ENCODE measurements at regions of chr3 and their contacts with region 1.

Region 1: DNA sequence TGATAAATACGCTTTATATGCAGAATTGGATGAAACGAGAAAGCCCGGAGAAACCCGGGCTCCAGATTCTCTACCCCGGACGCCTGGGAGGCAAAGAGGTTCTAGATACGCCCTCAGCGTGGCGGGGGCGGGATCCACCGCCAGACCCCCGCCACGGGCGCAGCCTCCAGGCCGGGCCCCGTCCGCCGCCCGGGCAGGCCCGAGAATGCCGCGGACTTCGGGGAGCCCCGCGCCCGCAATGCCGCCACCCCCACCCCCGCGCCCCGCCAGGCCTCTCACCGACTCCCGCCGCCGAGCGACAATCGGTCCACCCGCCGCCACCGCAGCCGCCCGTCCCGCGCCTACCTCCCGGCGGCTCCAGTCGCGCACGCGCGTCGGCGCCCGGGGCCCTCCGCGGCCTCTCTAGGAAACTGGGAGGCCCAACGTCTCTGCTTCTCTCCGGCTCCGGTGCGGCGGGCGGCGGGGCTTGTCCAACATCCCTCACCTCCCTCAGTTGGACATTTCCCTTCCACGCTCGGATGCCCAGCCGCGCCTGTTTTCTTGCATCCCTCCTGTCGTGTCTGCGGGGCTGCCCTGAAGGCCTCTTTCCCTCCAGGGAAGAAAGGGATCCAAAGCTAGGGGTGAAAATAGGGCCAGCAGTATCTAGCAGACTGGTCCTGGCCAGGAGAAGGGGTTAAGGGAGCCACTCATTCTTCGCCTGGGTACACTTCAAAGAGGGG is at the start of gene ZNF445:
- DNase-seq: peak; percentile 83 to 91
- ATAC-seq: peak; percentile 90 to 100 (median 97)
- H3K4me3 ChIP-seq: peak within 1 kb of the TSS; percentile 85
- H3K27ac ChIP-seq: peak within 1 kb of the TSS; percentile 80
- H3K4me1 ChIP-seq: peaks cover 29% of the 10 kb centered on the region
- H3K27me3 ChIP-seq: no peaks in the 10 kb centered on the region
- CTCF ChIP-seq: no peak
- total RNA-seq, gene ZNF445: 7.3 to 16.8 (median 9.7) TPM

Region 2: DNA sequence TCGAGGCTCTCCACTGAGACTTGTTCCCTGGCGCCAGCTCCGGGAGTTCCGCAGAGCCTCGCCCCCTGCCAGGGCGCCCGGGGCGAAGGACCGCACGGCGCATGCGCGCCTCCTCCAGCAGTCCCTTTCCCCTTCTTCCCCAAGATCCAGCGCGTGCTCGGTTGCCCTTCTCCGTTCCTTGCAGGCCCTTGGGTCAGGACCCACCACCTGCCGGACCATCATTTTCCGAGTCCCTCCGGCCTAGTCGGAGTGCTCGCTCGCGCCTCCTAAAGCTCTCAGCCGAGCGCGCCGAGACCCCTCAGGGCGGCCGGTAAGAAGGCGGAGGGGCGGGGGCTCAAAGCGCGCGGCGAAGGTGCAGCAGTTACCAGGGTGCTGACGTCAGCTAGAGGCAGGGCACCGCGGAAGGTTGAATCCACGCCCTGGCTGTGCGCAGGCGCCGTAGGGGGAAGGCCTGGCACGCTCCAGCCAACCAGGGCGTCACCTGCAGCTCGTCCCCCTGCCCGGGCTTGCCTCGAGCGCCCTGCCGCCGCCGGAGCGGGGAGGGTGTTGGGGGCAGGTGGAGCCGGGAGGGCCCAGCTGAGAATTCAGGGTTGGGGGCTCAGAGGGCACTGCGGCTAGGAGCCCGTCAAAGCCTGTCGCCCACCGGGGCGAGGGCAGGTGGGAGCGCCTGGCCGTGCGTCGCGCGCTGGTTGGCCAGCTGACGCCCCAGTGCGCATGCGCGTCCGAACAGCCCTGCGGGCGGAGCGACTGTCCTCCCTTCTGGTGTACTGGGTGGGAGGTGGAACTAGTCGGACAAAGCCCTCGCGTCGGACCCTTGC is 139.3 kb before region 1 on chr3 and contains the start of gene TCAIM:
- intact Hi-C with region 1: loop called in 1 of 2 experiments (anchors 10 kb)
- DNase-seq: peak; percentile 97 to 99
- ATAC-seq: peak; percentile 99
- H3K4me3 ChIP-seq: peak within 1 kb of the TSS; percentile 73
- H3K27ac ChIP-seq: peak within 1 kb of the TSS; percentile 99
- H3K4me1 ChIP-seq: peaks cover 25% of the 10 kb centered on the region
- H3K27me3 ChIP-seq: no peaks in the 10 kb centered on the region
- CTCF ChIP-seq: no peak
- total RNA-seq, gene TCAIM: 15.8 to 31.0 (median 19.6) TPM

Region 3: DNA sequence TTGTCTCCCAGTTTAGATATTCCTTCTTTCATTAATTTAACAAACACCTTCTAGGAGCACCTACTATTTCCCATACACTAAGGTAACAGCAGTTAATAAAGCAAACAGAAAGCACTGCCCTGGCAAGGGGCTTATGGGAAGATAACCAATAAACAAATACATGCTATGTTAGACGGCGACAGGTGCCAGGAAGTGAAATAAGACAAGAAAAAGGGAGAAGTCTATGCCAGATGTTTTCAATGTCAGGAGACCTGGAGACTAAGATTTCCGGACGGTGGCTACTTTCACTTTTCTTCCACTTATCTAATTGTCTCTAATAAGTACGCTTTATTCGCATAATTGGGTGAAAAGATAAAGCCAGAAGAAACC is 32.5 kb after region 1 on chr3:
- intact Hi-C with region 1: loop called (anchors 5 kb)
- DNase-seq: no peak
- ATAC-seq: peak in 2 of 4 donors; percentile 5 to 38
- H3K4me3 ChIP-seq: peak overlapping the region; percentile 86
- H3K27ac ChIP-seq: peak overlapping the region; percentile 85
- H3K4me1 ChIP-seq: peaks cover 19% of the 10 kb centered on the region
- H3K27me3 ChIP-seq: no peaks in the 10 kb centered on the region
- CTCF ChIP-seq: no peak

Region 4: DNA sequence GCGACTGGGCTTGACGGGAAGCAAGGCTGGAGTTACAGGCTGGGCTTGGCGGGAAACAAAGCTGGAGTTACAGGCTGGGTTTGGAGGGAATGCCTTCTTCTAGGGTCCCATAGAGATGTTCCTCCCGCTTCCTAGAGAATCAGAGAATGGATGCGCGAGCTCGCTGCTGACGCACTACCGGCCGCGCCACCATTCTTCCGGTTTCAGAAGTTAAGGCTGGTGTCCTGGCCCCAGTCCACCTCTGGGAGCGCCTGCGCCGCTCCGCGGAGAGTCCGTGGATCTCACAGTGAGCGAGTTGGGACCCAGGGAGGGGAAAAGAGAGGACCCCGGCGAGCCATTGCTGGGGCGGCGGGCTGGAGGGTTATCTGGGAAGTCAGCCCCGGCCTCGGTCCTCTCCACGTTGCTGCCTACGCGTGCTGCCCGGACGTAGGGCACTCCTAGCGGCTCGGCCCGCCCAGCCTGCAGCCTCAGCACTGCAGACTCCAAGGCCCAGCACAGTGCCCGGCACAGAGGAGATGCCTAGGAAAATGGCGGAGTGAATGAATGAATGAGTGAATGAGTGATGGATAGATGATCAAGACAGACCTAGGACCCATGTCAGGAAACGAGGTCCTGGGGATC is 235.1 kb after region 1 on chr3 and contains the start of gene ZNF502:
- intact Hi-C with region 1: loop called in 1 of 2 experiments (anchors 10 kb)
- DNase-seq: peak; percentile 91 to 94
- ATAC-seq: peak; percentile 92 to 100 (median 98)
- H3K4me3 ChIP-seq: peak within 1 kb of the TSS; percentile 92
- H3K27ac ChIP-seq: peak within 1 kb of the TSS; percentile 80
- H3K4me1 ChIP-seq: no peaks in the 10 kb centered on the region
- H3K27me3 ChIP-seq: peaks cover 0 to 6% (median 0%) of the 10 kb centered on the region in 3 donors
- CTCF ChIP-seq: peak; percentile 36
- total RNA-seq, gene ZNF502: 3.2 to 4.0 (median 3.7) TPM